AG04450 (cell line): ENCODE measurements at regions of chr5 and their contacts with region 1.

Region 1: GRCh38 chr5:15003511-15003920 is 131.9 kb upstream of the ANKH start:
- DNase-seq: peak; percentile 39
- H3K4me3 ChIP-seq: no peak overlapping the region
- H3K27ac ChIP-seq: no peak overlapping the region
- H3K27me3 ChIP-seq: peaks cover under 1% of the 10 kb centered on the region
- CTCF ChIP-seq: peak; percentile 82

Region 2: GRCh38 chr5:14286574-14287421 is 716.7 kb before region 1 on chr5:
- CTCF ChIA-PET with region 1: no interaction called
- POLR2A ChIA-PET with region 1: no interaction called
- DNase-seq: no peak
- H3K4me3 ChIP-seq: no peak overlapping the region
- H3K27ac ChIP-seq: no peak overlapping the region
- H3K27me3 ChIP-seq: no peaks in the 10 kb centered on the region
- CTCF ChIP-seq: no peak

Region 3: DNA sequence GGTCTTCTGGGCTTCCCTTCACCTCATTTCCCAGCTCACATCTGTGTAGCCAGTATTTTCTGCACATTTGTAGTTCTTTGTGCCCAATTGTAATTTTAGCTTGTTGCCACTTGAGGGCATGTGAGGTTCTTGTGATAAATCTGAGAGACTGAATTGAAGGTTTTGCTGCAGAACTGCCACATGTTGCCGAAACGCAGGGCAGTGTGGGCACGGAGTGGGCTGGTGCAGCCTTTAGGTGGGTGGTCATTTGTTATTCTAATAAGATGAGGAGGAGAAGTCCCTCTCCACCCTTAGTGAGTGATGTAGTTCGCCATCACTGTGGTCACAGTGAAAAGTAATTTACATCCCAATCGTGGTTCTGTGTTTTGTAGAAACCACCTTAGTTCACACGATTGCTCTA is 317.8 kb before region 1 on chr5:
- CTCF ChIA-PET with region 1: interaction called, 57 read pairs
- POLR2A ChIA-PET with region 1: no interaction called
- DNase-seq: peak; percentile 33
- H3K4me3 ChIP-seq: no peak overlapping the region
- H3K27ac ChIP-seq: no peak overlapping the region
- H3K27me3 ChIP-seq: no peaks in the 10 kb centered on the region
- CTCF ChIP-seq: peak; percentile 82

Region 4: GRCh38 chr5:14706615-14707021 is 296.9 kb before region 1 on chr5:
- CTCF ChIA-PET with region 1: interaction called, 15 read pairs
- POLR2A ChIA-PET with region 1: no interaction called
- DNase-seq: no peak
- H3K4me3 ChIP-seq: no peak overlapping the region
- H3K27ac ChIP-seq: peak overlapping the region; percentile 47
- H3K27me3 ChIP-seq: no peaks in the 10 kb centered on the region
- CTCF ChIP-seq: no peak

Region 5: DNA sequence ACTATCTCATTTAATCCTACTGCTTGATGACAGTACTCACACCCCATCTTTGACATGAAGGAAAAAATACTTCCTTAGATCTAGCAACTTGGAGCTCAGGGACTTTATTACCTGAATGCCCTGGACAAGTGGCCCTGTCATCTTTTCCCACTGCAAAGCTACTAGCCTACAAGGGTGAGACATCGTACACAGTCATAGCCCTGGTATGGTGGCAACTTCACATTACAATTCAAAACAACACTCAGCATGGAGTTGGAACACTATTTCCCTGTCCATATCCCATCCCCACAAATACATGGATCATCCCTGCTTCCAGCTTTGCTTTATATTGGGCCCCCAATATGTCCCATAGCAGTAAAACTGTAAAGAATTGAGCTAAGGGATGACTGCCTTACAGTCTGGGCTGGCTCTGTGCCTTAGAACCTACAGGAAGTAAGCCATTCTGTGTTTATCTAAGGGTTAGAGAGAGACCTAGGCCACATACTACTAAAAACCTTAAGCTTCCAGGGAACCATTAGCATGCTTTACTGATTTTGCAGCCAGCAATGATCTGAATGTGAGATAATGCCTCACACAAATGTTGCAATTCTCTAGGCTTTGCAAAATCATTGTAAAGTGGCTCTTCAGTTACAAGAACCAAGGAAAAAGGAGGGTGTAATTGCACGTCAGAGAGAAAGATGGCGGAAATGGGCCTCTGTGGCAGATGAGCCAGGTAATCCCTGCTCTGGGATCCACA is 283.1 kb before region 1 on chr5:
- CTCF ChIA-PET with region 1: interaction called, 192 read pairs
- POLR2A ChIA-PET with region 1: no interaction called
- DNase-seq: no peak
- H3K4me3 ChIP-seq: no peak overlapping the region
- H3K27ac ChIP-seq: peak overlapping the region; percentile 55
- H3K27me3 ChIP-seq: no peaks in the 10 kb centered on the region
- CTCF ChIP-seq: no peak

Region 6: DNA sequence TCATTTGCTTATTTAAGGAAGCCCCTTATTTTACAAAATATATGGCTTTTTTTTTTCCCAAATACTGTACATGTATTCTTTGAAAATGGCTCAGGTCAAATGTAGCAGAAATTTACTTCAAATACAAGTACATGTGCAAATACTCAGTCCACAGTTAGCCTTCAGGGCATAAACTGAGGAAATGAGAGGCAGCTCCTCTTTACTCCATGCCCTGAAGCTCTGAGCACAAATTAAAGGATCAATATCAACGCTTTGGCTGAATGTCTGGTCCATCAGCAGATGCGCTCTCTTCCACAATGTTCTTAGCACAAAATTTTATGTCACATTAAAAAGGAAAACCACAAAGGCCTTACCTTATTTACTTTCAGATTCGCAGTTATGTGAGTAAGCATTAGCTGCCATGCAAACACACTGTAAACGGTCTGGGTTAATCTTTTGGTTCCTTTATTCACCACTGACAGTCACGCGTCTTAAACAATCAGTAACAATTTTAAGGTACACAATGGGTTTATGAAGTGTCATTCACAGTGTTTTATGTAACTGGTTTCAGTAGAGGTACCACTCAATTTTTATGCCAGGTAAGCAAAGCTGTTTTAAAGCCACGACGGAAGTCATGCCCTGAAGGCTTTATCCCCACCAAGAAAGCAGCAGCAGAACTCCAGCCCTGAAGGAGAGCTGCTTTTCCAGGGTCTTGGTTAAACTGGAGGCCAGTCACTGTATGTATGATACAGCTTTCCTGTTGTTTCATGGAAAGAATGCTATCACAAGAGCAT is 235.6 kb before region 1 on chr5:
- CTCF ChIA-PET with region 1: interaction called, 12 read pairs
- POLR2A ChIA-PET with region 1: no interaction called
- DNase-seq: no peak
- H3K4me3 ChIP-seq: no peak overlapping the region
- H3K27ac ChIP-seq: no peak overlapping the region
- H3K27me3 ChIP-seq: no peaks in the 10 kb centered on the region
- CTCF ChIP-seq: no peak

Region 7: DNA sequence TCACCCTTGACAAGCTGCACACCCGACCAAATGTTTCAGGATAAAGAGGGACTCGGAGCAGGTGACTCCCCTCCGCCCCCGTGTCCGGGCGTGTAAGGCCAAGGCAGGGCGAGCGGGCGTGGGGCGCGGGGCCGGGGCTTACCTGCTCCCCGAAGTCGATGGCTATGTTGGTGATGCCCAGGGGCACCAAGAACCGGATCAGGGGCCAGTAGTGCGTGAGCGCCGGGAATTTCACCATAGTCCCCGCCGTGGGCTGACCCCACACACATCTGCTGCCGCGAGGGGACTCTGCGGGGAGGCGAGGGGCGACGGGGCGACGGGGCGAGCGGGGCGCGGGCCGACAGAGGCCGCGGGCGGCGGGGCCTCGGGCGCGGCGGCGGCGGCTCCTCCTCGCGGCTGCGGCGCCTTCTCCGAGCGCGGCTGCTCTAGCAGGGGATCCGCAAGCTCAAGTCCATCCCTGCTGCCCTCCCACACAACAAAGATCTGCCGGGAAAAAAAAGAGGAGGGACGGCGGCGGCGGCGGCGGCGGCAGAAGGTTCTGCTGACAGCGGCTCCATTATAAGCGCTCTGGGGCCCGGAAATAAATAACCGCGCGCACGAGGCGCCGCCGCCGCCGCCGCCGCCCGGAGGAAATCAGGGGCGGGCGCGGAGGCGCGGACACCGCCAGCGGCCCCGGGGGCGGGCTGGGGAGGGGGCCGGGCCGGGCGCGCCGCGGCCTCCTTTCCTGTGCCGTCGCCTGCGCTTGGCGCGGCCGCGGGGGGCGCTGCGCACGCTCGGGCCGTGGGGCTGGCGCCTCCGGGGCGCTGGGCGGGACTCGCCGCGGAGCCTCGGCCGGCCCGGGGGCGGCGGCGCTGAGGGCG is 132.1 kb before region 1 on chr5 and contains the start of gene ANKH:
- CTCF ChIA-PET with region 1: interaction called, 18 read pairs
- POLR2A ChIA-PET with region 1: no interaction called
- DNase-seq: peak; percentile 16
- H3K4me3 ChIP-seq: peak within 1 kb of the TSS; percentile 79
- H3K27ac ChIP-seq: peak within 1 kb of the TSS; percentile 34
- H3K27me3 ChIP-seq: no peaks in the 10 kb centered on the region
- CTCF ChIP-seq: no peak
- polyA plus RNA-seq, gene ANKH: 14.2 and 14.3 TPM in 2 replicates

Region 8: DNA sequence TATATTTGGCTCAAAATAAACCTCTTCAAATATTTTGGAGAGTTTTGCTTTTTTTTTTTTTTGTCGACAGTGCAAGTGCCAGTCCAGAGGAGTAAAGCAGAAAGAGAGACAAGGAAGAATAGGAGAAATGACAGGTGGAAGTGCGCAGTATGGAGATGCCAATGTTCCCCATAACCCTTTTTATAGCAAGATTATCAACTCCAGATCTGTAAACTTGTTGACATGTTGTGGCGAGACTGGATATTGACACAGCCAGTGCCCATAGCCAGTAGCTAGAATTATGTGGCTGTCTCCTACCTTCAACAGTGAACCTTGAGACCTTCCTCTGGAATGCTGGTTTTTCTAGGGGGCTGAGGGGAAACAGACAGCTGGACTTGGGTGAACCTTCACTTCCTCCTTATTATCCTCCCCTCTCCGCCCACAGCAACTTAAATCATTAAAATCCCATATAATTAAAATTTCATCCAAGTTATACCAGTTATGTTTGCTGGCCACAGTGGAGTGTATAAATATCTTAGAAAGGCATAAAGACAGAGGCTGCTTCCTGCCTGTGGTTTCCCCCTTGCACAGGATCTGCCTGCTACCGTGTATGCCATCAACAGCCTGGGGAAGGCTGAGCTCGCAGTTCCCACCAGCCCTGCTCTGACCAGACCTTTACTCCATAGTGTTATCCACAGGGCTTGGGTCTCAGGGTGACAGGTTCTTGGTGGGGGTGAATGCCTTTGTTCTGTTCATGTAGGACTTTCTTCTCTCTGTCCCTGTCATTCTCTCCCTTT is 19.7 kb before region 1 on chr5:
- CTCF ChIA-PET with region 1: interaction called, 18 read pairs
- POLR2A ChIA-PET with region 1: no interaction called
- DNase-seq: no peak
- H3K4me3 ChIP-seq: no peak overlapping the region
- H3K27ac ChIP-seq: no peak overlapping the region
- H3K27me3 ChIP-seq: peaks cover 13% of the 10 kb centered on the region
- CTCF ChIP-seq: no peak